K562 (cell line): ENCODE measurements at regions of chr12 and their contacts with region 1.

Region 1: DNA sequence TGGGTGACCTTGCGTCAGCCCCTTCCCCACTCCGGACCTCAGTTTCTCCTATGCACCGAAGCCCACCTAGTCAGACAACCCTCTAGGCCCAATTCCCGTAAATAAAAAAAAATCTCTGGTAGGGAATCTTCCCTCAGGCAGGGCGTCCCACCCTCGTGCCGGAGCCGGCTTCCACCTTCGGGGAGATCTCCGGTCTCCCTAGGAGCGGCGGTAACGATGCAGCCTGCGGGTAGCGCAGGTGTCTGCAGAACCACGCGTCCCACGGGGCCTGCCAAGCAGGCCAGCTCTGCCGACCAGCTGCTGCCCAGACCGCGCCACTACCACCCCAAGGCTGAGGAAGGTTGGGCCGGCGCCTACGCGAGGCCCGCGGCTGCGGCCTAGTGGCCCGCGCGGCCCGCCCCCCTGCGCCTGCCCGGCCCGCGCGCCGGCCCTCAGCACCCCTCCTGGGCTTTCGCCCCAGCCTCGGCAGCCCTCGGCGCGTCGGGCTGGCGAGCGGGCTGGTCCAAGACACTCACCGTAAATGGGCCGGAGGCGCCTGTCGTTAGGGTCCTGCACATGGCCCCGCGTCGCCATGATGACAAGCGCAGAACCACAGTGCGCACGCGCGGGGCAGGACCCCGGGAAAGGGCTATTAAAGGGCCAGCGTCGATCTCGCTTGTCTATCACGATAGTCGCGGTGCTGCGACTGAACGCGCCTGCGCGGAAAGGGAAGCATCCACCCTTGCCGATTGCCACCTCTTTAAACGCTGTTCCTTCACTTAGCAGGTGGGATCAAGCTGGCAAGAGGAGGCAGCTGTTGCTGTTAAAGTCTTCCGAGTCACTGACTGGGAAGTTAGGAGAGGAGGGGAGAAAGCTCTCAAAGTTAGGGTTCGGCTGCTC is at the start of gene NAA25:
- DNase-seq: peak; percentile 89 to 94 (median 92)
- ATAC-seq: peak; percentile 73
- H3K4me3 ChIP-seq: peak within 1 kb of the TSS; percentile 96
- H3K27ac ChIP-seq: peak within 1 kb of the TSS; percentile 88
- H3K4me1 ChIP-seq: peaks cover 32 to 36% of the 10 kb centered on the region in 2 experiments; a peak in 4 of 5 replicates
- H3K27me3 ChIP-seq: no peaks in the 10 kb centered on the region
- CTCF ChIP-seq: 0 out of 6 replicates have a peak, but pooled peaks of 1 of the 3 experiments have one; percentile 2
- EP300 ChIP-seq: 0 out of 2 replicates have a peak, but pooled peaks have one; percentile 4
- POLR2A ChIP-seq: peak; percentile 76; the same call in 1 of the 2 replicates
- RAD21 ChIP-seq: no peak
- polyA plus RNA-seq, gene NAA25: 40.6 to 53.4 TPM

Region 2: GRCh38 chr12:112096667-112097066 is 11.8 kb before region 1 on chr12:
- CTCF ChIA-PET with region 1: no interaction called
- POLR2A ChIA-PET with region 1: interaction called, 24 read pairs
- in situ Hi-C with region 1: no loop called
- intact Hi-C with region 1: no loop called
- DNase-seq: peak in 1 of 4 experiments; percentile 30
- ATAC-seq: peak; percentile 49
- H3K4me3 ChIP-seq: no peak overlapping the region
- H3K27ac ChIP-seq: peak overlapping the region; percentile 54; the same call in 2 of the 3 replicates
- H3K4me1 ChIP-seq: peaks cover 0 to 6% of the 10 kb centered on the region in 2 experiments; a peak in 2 of 5 replicates
- H3K27me3 ChIP-seq: no peaks in the 10 kb centered on the region
- CTCF ChIP-seq: no peak
- EP300 ChIP-seq: no peak
- POLR2A ChIP-seq: 0 out of 2 replicates have a peak, but pooled peaks have one; percentile 32
- RAD21 ChIP-seq: no peak

Region 3: GRCh38 chr12:112125250-112125999 is 17.0 kb after region 1 on chr12 and contains the start of gene TRAFD1:
- CTCF ChIA-PET with region 1: no interaction called
- POLR2A ChIA-PET with region 1: interaction called, 14 read pairs
- in situ Hi-C with region 1: no loop called
- intact Hi-C with region 1: no loop called
- DNase-seq: peak; percentile 99 to 100 (median 100)
- ATAC-seq: peak; percentile 98
- H3K4me3 ChIP-seq: peak within 1 kb of the TSS; percentile 88
- H3K27ac ChIP-seq: peak within 1 kb of the TSS; percentile 88
- H3K4me1 ChIP-seq: peaks cover 38 to 44% of the 10 kb centered on the region in 2 experiments
- H3K27me3 ChIP-seq: no peaks in the 10 kb centered on the region
- CTCF ChIP-seq: no peak
- EP300 ChIP-seq: no peak
- POLR2A ChIP-seq: peak; percentile 95
- RAD21 ChIP-seq: no peak
- polyA plus RNA-seq, gene TRAFD1: 54.5 to 85.5 TPM

Region 4: GRCh38 chr12:112170376-112170775 is 61.9 kb after region 1 on chr12:
- CTCF ChIA-PET with region 1: no interaction called
- POLR2A ChIA-PET with region 1: no interaction called
- in situ Hi-C with region 1: no loop called
- intact Hi-C with region 1: loop called (anchors 2 kb)
- DNase-seq: peak; percentile 72 to 84 (median 78)
- ATAC-seq: peak; percentile 96
- H3K4me3 ChIP-seq: no peak overlapping the region
- H3K27ac ChIP-seq: no peak overlapping the region
- H3K4me1 ChIP-seq: peaks cover 0 to 25% of the 10 kb centered on the region in 2 experiments; a peak in 2 of 5 replicates
- H3K27me3 ChIP-seq: no peaks in the 10 kb centered on the region
- CTCF ChIP-seq: peak; percentile 75 to 85 (median 77)
- EP300 ChIP-seq: no peak
- POLR2A ChIP-seq: no peak
- RAD21 ChIP-seq: peak; percentile 64 to 80